ENCODE measurements at regions of chr12 and their contacts with region 1.

Region 1: DNA sequence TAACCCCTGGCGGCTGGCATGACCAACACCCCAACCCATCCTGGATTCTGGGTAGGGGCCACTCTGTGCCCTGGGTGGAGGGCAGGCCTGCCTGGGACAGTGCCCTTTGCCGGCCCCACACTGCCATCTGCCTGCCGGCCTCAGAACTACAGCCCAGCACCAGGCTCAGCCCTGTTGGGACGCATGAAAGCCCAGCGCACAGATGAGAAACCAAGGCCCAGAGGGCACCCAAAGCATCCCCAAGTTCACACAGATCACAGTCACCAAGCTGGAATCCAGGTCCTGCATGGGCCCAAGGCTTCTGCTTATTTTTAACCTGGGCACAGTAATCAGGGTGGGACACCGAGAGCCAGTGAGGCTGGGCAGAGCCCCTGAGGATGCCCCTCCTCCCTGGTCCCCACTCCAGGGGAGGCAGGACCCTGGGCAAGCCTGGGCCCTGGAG is 26.2 kb downstream of the RFLNA start:
- DNase-seq: peak; percentile 87
- CTCF ChIP-seq: peak; percentile 93

Region 2: DNA sequence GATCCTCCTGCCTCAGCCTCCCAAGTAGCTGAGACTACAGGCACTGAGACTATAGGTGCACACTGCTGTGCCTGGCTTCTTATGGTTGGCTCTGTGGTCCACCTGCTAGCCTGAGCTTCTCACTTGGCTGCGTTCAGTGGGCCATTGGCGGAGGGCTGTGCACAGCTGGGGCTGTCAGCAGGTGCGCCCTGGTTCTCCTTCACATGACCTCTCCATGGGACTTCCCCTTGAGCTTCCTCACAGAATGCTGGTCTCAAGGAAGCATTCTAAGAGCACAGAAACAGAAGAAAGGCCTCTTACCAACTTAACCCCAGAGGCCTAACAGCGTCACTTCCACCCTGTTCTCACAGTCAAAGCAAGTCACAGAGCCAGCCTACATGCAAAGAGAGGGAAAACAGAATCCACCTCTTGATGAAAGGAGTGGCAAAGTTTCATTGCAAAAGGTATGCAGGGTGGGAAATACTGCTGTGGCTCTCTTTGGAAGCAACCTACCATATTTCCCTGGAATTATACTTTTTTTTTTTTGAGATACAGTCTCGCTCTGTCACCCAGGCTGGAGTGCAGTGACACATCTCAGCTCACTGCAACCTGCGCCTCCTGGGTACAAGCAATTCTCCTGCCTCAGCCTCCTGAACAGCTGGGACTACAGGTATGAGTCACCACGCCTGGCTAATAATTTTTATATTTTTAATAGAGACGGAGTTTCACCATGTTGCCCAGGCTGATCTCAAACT is 893.9 kb before region 1 on chr12:
- in situ Hi-C with region 1: no loop called
- DNase-seq: peak; percentile 75
- CTCF ChIP-seq: no peak

Region 3: DNA sequence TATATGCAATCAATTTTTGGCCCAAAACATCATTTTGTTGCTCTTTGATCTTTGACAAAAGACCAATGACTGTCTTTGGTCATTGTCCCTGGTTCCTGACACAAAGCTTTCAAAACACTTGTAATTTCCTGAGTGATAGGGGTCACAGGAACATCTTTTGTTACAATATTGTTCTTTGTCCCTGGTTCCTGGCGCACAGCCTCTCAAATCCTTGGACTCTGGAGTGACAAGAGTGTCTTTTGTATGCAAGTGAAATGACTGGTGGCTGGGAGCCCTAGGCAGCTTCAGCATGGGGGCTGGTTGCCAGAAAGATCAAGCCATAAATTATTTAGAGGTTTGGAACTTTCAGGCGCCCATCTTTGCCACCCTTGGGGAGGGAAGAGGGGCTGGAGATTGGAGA is 505.1 kb before region 1 on chr12:
- in situ Hi-C with region 1: no loop called
- DNase-seq: no peak
- CTCF ChIP-seq: no peak

Region 4: DNA sequence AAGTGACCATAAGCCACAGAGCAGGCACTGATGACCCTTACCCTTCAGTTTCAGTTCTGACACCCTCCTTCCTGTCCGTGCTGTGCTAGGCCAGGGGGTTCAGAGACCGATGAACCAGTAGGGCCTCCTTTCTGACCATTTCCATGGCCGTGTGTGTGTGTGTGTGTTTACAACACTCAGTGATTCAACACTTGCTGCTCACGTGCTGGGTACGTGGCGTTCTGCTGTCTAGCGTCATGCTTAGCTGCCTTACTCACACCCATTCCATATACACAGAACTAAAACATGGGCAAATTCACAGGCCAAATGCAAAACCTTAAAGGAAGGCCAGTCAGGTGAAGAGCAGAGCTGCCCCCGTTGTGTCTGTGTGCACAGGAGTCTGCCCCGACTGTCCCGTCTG is 491.5 kb before region 1 on chr12:
- in situ Hi-C with region 1: no loop called
- DNase-seq: no peak
- CTCF ChIP-seq: no peak

Region 5: DNA sequence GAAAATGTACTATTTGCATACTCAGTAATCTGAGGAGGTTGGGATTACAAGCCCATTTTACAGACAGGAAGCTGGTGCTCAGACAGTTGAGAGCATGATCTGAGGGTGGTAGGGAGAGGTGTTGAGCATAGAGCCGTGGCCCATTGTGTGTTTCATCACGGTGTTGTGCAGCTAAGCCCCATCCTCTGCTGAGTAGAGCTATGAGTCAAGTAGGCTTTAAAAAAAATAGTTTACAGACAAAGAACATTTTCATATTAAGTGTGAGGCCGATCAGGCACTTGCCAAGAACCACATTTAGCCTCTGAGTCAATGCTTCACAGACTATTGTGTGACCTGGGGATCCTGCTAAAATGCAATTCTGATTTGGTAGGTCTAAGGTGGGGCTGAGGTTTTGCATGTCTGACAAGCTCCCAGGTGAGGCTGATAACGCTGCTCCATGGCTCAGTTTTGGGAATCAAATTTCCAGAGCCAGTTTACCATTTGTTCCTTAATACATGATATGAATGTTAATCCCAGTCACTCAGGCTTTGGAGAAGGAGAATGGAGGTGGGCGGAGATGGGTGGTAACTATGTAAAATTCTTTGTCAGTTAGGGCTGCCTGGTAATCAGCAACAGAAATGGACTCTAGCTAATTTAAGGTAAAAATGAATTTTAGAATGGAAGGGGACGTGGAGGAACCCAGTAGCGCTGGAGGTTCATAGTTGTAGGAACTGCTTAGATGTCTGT is 325.9 kb before region 1 on chr12:
- in situ Hi-C with region 1: no loop called
- DNase-seq: no peak
- CTCF ChIP-seq: no peak

Region 6: DNA sequence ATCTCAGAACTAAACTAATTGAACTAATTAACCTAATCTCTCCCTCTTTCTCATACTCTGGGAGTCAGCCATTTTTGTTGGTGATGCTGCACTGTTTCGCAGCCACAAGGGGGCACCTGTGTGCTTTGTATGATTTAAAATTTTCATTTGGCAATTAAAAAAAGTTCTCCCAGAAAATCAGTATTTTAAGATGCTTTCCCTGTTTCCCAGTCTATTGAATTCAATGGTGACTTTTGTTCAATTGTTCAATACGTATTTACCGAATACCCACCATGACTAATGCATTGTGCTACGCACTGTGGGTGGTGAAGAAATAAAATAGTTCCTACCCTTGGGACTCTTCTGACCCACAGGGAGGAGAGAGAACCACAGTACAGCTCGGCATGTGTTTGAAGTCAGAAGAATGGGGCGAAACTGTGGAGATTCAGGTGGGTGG is 284.4 kb before region 1 on chr12:
- in situ Hi-C with region 1: loop called (anchors 25 kb)
- DNase-seq: peak; percentile 77
- CTCF ChIP-seq: peak; percentile 88